ENCODE measurements at regions of chr11 and their contacts with region 1.

Region 1: GRCh38 chr11:44565211-44565952 is at the start of gene CD82:
- DNase-seq: peak; percentile 98 to 99
- H3K4me3 ChIP-seq: peak within 1 kb of the TSS; percentile 52
- H3K4me3 Mint-ChIP-seq: peak within 1 kb of the TSS; percentile 72
- H3K27ac Mint-ChIP-seq: peak within 1 kb of the TSS; percentile 51
- H3K4me1 ChIP-seq: no peaks in the 10 kb centered on the region
- H3K4me1 Mint-ChIP-seq: no peaks in the 10 kb centered on the region
- H3K27me3 ChIP-seq: no peaks in the 10 kb centered on the region; the same call in 1 of the 2 replicates
- H3K27me3 Mint-ChIP-seq: peaks cover 4% of the 10 kb centered on the region
- CTCF ChIP-seq: peak; percentile 35
- total RNA-seq, gene CD82: 3.7 and 4.3 TPM in 2 replicates

Region 2: GRCh38 chr11:44527476-44527875 is 37.9 kb before region 1 on chr11:
- CTCF ChIA-PET with region 1: no interaction called
- POLR2A ChIA-PET with region 1: no interaction called
- intact Hi-C with region 1: loop called (anchors 1 kb)
- DNase-seq: no peak
- H3K4me3 ChIP-seq: no peak overlapping the region
- H3K4me3 Mint-ChIP-seq: no peak overlapping the region
- H3K27ac Mint-ChIP-seq: no peak overlapping the region
- H3K4me1 ChIP-seq: 0 out of 2 replicates have a peak, but pooled peaks cover 5% of the 10 kb centered on the region
- H3K4me1 Mint-ChIP-seq: no peaks in the 10 kb centered on the region
- H3K27me3 ChIP-seq: no peaks in the 10 kb centered on the region
- H3K27me3 Mint-ChIP-seq: no peaks in the 10 kb centered on the region
- CTCF ChIP-seq: no peak

Region 3: GRCh38 chr11:44578279-44578678 is 12.9 kb after region 1 on chr11:
- CTCF ChIA-PET with region 1: no interaction called
- POLR2A ChIA-PET with region 1: no interaction called
- intact Hi-C with region 1: no loop called
- DNase-seq: no peak
- H3K4me3 ChIP-seq: no peak overlapping the region
- H3K4me3 Mint-ChIP-seq: no peak overlapping the region
- H3K27ac Mint-ChIP-seq: no peak overlapping the region
- H3K4me1 ChIP-seq: no peaks in the 10 kb centered on the region
- H3K4me1 Mint-ChIP-seq: no peaks in the 10 kb centered on the region
- H3K27me3 ChIP-seq: no peaks in the 10 kb centered on the region
- H3K27me3 Mint-ChIP-seq: no peaks in the 10 kb centered on the region
- CTCF ChIP-seq: no peak

Region 4: GRCh38 chr11:44743959-44744557 is 178.7 kb after region 1 on chr11:
- CTCF ChIA-PET with region 1: no interaction called
- POLR2A ChIA-PET with region 1: no interaction called
- intact Hi-C with region 1: no loop called
- DNase-seq: no peak
- H3K4me3 ChIP-seq: no peak overlapping the region
- H3K4me3 Mint-ChIP-seq: no peak overlapping the region
- H3K27ac Mint-ChIP-seq: no peak overlapping the region
- H3K4me1 ChIP-seq: no peaks in the 10 kb centered on the region
- H3K4me1 Mint-ChIP-seq: no peaks in the 10 kb centered on the region
- H3K27me3 ChIP-seq: no peaks in the 10 kb centered on the region
- H3K27me3 Mint-ChIP-seq: no peaks in the 10 kb centered on the region
- CTCF ChIP-seq: no peak

Region 5: DNA sequence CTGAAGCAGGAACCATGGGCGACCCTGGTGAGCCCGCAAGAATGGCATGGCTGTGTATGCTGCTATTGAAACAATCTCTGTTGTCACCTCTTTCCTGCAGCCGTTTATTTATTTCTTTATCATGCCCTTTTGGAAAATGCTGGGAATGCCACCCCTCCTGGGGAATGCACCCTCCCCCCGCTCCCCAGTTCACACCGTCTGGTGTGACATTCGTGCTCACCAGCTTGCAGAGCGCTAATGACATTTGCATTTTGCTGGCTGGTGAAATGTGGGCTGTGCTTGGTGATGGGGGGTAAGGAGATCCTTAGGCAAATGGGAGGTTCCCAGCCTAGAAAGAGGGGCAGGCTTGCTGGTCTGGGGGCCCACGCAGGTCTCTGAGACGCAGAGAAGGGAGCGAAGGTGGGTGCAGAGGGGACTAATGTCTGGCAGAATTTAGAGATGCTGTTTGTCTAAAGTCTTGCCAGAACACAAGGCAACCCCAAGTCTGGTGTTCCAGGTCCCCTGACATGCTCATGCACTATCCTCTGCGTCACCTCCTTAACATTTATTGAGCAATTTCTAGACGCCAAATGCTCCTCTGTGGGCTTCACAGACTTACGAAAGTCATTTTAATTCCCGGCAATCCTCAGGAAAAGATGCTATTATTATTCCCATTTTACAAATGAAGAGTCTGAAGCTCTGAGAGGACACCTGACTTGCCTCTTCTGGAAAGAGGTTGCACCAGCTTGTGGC is 293.6 kb after region 1 on chr11:
- CTCF ChIA-PET with region 1: no interaction called
- POLR2A ChIA-PET with region 1: no interaction called
- intact Hi-C with region 1: no loop called
- DNase-seq: no peak
- H3K4me3 ChIP-seq: no peak overlapping the region
- H3K4me3 Mint-ChIP-seq: no peak overlapping the region
- H3K27ac Mint-ChIP-seq: no peak overlapping the region
- H3K4me1 ChIP-seq: peaks cover 16% of the 10 kb centered on the region
- H3K4me1 Mint-ChIP-seq: peaks cover 16% of the 10 kb centered on the region
- H3K27me3 ChIP-seq: no peaks in the 10 kb centered on the region
- H3K27me3 Mint-ChIP-seq: no peaks in the 10 kb centered on the region
- CTCF ChIP-seq: no peak